ENCODE measurements at regions of chrX and their contacts with region 1.

Region 1: DNA sequence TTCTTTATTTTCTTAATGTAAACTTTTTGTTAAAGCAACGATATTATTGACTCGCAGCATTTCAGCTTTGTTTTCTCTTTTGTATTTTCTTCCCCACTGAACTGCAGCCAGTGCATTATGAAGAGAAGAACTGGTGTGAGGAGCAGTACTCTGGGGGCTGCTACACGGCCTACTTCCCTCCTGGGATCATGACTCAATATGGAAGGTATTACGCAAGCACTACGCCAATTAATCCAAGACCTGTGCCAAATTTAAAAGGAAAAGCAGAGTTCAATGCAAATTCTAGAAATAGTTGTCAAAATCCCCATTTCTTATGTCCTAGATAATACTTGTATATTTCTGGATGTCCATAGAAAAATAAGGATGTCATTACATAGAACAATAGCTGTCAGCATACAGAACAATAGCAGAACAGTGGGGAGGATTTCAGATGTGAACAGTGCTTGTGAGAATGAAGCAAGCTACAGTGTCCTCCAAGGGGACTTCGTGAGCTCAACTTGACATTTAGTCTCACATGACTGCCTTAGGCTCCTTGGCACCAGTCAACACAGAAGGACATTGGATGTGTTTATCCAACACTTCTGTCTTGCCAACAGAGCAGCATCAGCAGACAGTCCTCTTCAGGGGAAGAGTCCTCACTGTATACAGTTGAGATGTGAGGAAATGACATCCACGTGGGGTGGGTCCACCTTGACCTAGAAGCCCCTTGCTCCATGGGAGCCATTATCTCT is 85.9 kb downstream of the MAOA start:
- DNase-seq: peak in 1 of 3 donors; percentile 40
- ATAC-seq: peak; percentile 90 to 91
- H3K4me3 ChIP-seq: no peak overlapping the region
- H3K27ac ChIP-seq: peak overlapping the region; percentile 80
- H3K4me1 ChIP-seq: peaks cover 1% of the 10 kb centered on the region
- H3K27me3 ChIP-seq: no peaks in the 10 kb centered on the region

Region 2: GRCh38 chrX:43654431-43655150 is 87.4 kb before region 1 on chrX:
- intact Hi-C with region 1: loop called in 1 of 4 experiments (anchors 5 kb)
- DNase-seq: peak; percentile 93 to 98 (median 97)
- ATAC-seq: peak; percentile 98 to 99
- H3K4me3 ChIP-seq: peak overlapping the region; percentile 84
- H3K27ac ChIP-seq: peak overlapping the region; percentile 99
- H3K4me1 ChIP-seq: no peaks in the 10 kb centered on the region
- H3K27me3 ChIP-seq: no peaks in the 10 kb centered on the region

Region 3: GRCh38 chrX:43661521-43662240 is 80.3 kb before region 1 on chrX:
- intact Hi-C with region 1: loop called in 2 of 4 experiments (anchors 5 to 10 kb)
- DNase-seq: no peak
- ATAC-seq: peak; percentile 61 to 74
- H3K4me3 ChIP-seq: no peak overlapping the region
- H3K27ac ChIP-seq: no peak overlapping the region
- H3K4me1 ChIP-seq: peaks cover 3% of the 10 kb centered on the region
- H3K27me3 ChIP-seq: no peaks in the 10 kb centered on the region